Activated B cell treated with CpG ODN at 0.5 μM for 24 hours (primary cell): ENCODE measurements at regions of chr17 and their contacts with region 1.

Region 1: DNA sequence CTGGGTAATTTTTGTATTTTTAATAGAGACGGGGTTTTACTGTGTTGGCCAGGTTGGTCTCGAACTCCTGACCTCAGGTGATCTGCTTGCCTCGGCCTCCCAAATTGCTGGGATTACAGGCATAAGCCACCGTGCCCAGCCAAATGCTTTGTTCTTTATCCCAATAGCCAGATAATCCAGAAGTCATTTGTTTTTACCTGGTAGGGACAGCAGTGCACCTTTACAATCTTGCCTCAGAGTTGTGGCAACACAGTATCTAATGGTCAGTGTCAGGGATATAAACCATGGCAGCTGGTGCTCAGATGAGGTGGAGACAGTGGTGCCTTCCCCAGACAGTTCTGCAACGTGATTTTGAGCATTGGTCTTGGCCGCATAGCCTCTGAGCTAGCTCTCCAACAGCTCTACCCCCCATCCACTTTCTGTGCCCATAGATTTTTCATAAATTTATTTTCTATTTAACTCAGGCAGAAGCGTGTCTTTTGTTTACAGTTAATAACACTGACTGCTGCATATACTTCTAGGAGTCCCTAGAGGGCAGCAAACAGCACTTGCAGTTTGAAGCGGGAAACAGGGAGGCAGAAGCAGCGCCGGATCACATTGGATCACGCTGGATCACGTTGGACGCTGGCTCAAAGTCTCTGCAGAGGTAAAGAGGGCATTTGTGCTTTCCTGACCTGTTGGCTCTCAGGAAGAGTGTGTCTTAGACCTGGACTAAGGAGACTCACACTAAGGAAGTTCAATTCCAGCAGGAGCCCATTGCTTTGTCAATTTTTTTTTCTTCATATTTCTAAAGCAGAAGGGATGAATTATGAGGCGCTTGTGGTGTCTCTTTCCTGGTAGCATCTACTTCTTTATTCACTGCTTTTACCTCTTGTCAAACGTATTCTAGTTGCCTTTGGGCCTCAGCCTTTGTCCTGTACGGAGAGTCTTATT is 5.1 kb upstream of the GGT6 start:
- DNase-seq: no peak
- ATAC-seq: peak; percentile 71
- H3K4me3 Mint-ChIP-seq: no peak overlapping the region
- H3K27ac Mint-ChIP-seq: no peak overlapping the region
- H3K4me1 Mint-ChIP-seq: peaks cover 23% of the 10 kb centered on the region
- H3K27me3 Mint-ChIP-seq: peaks cover 1% of the 10 kb centered on the region
- CTCF ChIP-seq: peak; percentile 86

Region 2: GRCh38 chr17:4420692-4421131 is 144.8 kb before region 1 on chr17:
- CTCF ChIA-PET with region 1: interaction called, 5 read pairs
- POLR2A ChIA-PET with region 1: no interaction called
- intact Hi-C with region 1: loop called (anchors 1 kb)
- DNase-seq: peak; percentile 24
- ATAC-seq: peak; percentile 98
- H3K4me3 Mint-ChIP-seq: no peak overlapping the region
- H3K27ac Mint-ChIP-seq: no peak overlapping the region
- H3K4me1 Mint-ChIP-seq: peaks cover 4% of the 10 kb centered on the region
- H3K27me3 Mint-ChIP-seq: no peaks in the 10 kb centered on the region
- CTCF ChIP-seq: no peak

Region 3: DNA sequence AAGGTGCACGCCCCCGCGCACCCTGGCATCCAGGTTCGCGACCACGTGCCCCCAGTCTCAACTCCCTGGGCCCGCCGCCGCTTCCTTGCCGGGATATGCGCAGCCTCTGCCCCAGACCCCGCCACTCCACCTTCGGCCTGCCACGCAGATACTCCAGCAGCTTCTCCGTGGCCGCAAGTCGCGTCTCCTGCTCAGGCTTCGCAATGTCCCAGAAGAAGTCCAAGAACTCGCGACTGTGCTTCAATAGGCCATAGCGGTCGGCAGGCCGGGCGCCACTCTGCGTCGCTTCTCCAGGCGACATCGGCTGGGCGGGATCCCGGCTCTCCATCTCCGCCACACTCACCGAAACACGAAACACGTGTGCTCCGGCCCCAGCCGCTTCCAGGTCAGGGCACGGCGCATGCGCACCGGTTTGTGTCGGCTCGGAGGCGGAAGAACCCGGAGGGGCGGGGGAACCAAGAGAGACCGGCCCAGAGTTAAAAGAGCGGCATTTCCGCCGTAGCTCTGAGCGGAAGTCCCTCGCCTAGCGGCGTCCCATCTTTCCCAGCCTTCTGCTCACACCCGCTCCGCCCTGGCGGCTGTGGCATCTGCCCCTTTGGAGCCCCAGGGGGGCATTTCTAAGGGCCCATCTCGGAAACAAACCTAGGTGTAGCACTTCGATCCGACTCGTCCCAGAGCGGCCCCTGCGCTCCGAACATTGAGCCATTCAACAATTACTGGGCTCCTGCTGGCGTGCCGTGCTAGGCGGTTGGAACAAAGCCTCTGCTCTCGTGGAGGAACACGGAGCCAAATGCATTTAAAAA is 10.3 kb before region 1 on chr17 and contains the start of gene MYBBP1A:
- CTCF ChIA-PET with region 1: interaction called, 12 read pairs
- POLR2A ChIA-PET with region 1: interaction called, 7 read pairs
- intact Hi-C with region 1: loop called (anchors 1 kb)
- DNase-seq: peak; percentile 94
- ATAC-seq: peak; percentile 95
- H3K4me3 Mint-ChIP-seq: peak within 1 kb of the TSS; percentile 96
- H3K27ac Mint-ChIP-seq: peak within 1 kb of the TSS; percentile 98
- H3K4me1 Mint-ChIP-seq: peaks cover 28% of the 10 kb centered on the region
- H3K27me3 Mint-ChIP-seq: no peaks in the 10 kb centered on the region
- CTCF ChIP-seq: no peak
- total RNA-seq, gene MYBBP1A: 90.3 and 108 TPM in 2 replicates

Region 4: DNA sequence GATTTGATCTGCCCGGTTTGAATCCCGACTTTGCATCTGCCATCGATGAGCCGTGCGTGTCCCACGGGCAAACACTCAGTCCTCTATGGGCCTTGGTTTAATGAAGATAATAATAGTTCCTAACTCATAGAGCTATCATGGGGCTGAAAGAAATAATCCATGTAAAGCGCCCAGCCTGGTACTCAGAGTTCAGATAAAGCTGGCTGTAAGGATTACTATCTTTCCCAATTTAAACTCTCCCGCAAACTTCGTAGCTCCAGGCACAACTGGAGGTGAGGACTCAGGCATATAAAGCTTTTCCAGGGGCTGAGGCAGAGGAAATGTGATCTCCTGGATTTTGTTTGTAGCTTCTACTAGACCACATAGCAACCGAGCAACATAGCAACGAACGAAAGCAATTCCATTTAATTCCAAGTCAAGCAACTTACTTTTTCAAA is 59.7 kb after region 1 on chr17:
- CTCF ChIA-PET with region 1: interaction called, 25 read pairs
- POLR2A ChIA-PET with region 1: interaction called, 6 read pairs
- intact Hi-C with region 1: loop called (anchors 1 kb)
- DNase-seq: no peak
- ATAC-seq: no peak
- H3K4me3 Mint-ChIP-seq: no peak overlapping the region
- H3K27ac Mint-ChIP-seq: no peak overlapping the region
- H3K4me1 Mint-ChIP-seq: peaks cover 2% of the 10 kb centered on the region
- H3K27me3 Mint-ChIP-seq: peaks cover 10% of the 10 kb centered on the region
- CTCF ChIP-seq: no peak

Region 5: DNA sequence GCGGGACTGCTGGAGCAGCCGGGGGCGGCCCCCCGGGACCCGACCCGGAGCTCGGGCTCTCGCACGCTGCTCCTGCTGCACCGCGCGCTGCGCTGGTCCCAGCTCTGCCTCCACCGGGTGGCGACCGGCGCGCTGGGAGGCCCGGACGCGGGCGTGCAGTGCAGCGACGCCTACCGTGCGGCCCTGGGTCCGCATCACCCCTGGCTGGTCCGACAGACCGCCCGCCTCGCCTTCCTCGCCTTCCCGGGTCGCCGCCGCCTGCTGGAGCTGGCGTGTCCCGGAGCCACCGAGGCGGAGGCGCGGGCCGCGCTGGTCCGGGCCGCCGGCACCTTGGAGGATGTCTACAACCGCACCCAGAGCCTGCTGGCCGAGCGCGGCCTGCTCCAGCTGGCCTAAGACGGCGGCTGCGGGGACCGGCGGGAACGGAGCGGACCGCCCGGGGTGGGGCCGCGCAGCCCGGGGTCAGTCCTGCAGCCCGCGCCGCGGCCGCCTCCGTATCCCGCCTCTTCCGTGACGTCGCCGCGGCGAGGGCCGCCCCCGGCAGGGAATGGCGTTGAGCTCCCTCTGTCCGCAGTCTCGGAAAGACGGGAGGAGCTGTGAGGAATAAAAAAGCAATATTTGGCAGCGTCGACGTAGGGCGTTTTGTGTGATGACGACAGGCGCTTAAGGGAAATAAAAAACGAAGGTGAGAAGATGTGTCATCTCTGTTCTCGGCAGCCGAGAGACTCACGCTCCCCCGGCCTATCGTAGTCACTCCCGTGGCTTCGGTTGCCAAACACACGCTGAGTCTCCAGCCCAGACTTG is 224.6 kb after region 1 on chr17:
- CTCF ChIA-PET with region 1: no interaction called
- POLR2A ChIA-PET with region 1: no interaction called
- intact Hi-C with region 1: loop called (anchors 2 kb)
- DNase-seq: peak; percentile 82
- ATAC-seq: peak; percentile 91
- H3K4me3 Mint-ChIP-seq: peak overlapping the region; percentile 89
- H3K27ac Mint-ChIP-seq: peak overlapping the region; percentile 80
- H3K4me1 Mint-ChIP-seq: peaks cover 19% of the 10 kb centered on the region
- H3K27me3 Mint-ChIP-seq: peaks cover 18% of the 10 kb centered on the region
- CTCF ChIP-seq: no peak

Region 6: DNA sequence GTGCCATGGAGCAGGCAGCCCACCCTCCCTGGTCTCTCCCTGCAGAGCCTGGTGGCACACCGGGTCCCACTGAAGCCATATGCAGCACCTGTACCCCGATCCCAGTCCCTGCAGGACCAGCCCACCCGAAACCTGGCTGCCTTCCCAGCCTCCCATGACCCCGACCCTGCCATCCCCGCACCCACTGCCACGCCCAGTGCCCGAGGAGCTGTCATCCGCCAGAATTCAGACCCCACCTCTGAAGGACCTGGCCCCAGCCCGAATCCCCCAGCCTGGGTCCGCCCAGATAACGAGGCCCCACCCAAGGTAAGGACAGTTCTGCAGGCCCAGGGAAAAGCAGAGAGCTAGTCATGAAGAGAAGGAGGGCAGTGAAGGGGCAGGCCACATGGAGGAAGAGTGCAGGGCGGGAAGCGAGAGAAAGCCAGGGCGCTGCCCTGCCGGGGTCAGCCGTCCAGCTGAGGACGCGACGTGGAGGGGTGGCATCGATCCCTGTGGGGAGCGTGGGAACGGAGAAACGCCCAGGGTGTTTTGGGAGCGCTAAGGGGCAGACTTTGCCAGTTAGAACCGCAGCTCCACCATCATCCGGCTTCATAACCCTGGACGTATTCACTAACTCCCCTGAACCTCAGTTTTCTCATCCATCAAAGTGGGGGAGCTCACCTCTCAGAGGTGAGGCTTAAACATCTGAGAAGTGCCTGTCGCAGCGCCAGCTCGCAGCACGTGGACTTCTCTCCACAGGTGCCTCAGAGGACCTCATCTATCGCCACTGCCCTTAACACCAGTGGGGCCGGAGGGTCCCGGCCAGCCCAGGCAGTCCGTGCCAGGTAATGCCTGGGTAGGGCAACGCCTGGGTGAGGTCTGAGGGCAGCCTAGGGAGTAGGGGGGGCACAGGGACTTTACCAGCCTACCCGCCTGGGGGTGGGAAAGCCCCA is 326.2 kb after region 1 on chr17:
- CTCF ChIA-PET with region 1: interaction called, 6 read pairs
- POLR2A ChIA-PET with region 1: interaction called, 5 read pairs
- intact Hi-C with region 1: loop called (anchors 1 kb)
- DNase-seq: no peak
- ATAC-seq: no peak
- H3K4me3 Mint-ChIP-seq: no peak overlapping the region
- H3K27ac Mint-ChIP-seq: no peak overlapping the region
- H3K4me1 Mint-ChIP-seq: peaks cover 4% of the 10 kb centered on the region
- H3K27me3 Mint-ChIP-seq: no peaks in the 10 kb centered on the region
- CTCF ChIP-seq: no peak

Region 7: DNA sequence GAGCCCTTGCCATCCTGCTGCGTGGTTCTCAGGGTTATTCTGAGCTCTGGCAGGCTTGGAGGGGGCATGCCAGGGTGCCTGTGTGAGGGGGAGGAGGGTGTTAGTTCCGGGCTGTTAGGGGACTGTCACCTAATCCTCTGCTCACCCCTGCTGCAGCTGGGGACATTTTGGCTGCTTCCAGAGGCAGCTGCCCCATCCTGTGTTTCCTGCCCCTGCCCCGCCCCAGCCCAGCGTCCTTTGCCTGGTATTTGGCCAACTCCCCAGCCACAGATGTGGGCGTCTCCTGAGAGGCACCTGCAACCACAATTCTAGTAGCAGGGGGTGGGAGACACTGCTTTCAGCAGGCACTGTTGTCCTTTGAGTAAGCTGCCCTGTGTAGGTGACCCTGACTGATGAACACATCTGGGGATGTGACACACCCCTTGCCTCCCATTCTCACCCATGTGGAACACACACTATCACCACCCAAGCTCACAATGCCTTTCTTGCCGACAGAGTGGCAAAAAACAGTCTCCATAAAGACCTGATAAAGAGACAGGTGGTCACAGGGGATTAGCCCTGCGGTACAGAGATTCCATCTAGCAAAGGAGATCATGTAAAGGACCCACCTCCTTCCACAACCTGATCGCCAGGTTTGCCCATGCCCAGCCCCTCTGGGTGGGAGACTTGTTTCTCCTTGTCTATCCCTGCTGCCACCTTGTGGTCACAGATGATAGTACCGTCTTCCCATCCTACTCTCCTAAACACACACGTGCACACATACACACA is 337.8 kb after region 1 on chr17 and contains the start of gene CHRNE:
- CTCF ChIA-PET with region 1: interaction called, 4 read pairs
- POLR2A ChIA-PET with region 1: no interaction called
- intact Hi-C with region 1: loop called (anchors 5 kb)
- DNase-seq: peak; percentile 49
- ATAC-seq: peak; percentile 41
- H3K4me3 Mint-ChIP-seq: peak within 1 kb of the TSS; percentile 49
- H3K27ac Mint-ChIP-seq: peak within 1 kb of the TSS; percentile 73
- H3K4me1 Mint-ChIP-seq: peaks cover 44% of the 10 kb centered on the region
- H3K27me3 Mint-ChIP-seq: peaks cover 2% of the 10 kb centered on the region
- CTCF ChIP-seq: no peak
- total RNA-seq, gene CHRNE: 0.38 and 0.66 TPM in 2 replicates